ENCODE measurements at regions of chr11 and their contacts with region 1.

Region 1: DNA sequence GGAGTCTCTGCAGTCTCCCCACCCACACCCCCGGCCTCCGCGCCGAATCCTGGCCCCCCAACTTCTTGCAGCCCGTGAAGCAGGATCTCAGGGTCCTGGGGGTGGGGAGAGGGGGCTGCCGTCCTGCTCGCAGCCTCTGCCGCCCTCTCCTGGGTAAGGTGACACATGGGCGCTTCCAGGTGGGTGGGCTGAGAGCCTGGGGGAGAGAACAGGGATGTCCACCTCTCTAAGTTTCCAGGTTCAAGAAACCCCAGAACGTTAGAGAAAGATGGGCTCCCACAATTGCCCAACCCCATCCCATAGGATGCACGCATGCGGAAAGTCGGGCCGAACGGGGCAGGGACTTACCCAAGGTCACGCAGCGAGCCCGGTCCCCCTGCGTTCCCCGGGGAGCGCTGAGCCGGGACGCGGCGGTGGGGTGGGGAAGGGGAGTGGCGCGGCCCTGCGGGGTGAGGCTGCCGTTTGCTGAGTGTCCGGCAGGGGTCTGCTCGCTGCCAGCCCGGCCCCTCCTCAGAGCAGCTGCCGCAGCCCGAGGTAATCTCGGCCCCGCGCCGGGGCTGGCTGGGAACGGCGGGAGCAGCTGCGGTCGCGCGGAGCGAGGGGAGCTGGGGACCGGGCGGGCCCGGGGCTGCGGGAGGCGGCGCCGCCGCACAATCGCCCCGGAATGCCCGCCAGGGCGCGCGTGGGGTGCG is 705 bp upstream of the CAPN1 start:
- DNase-seq: peak; percentile 62
- ATAC-seq: peak; percentile 72 to 73

Region 2: DNA sequence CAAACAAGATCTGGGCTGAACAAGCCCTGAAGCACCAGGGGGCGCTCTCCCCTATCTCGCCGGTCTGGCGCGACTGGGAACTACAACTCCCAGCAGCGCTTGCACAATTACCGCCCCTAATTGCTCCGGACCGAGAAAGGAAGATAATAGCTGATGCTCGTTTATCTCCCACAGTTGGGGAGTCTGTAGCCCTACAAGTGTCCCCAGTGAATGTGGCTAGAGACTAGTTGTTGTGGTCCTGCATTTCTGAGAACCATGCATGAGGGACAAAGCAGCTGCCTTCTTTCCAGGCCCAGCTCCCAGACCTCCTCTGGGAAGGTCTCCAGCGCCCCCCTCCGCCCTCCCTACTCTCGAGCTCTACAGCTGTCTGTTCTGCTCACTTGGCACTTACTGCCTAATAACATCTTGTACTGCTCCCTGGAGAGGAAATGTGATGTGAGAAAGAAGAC is 492.5 kb before region 1 on chr11:
- intact Hi-C with region 1: no loop called
- DNase-seq: peak; percentile 92
- ATAC-seq: peak; percentile 91 to 95

Region 3: GRCh38 chr11:65117216-65118096 is 63.6 kb before region 1 on chr11 and contains the start of gene ZNHIT2:
- intact Hi-C with region 1: loop called in 1 of 2 experiments (anchors 5 kb)
- DNase-seq: peak; percentile 100
- ATAC-seq: peak; percentile 86 to 87
- total RNA-seq, gene ZNHIT2: 6.6 to 8.2 TPM

Region 4: DNA sequence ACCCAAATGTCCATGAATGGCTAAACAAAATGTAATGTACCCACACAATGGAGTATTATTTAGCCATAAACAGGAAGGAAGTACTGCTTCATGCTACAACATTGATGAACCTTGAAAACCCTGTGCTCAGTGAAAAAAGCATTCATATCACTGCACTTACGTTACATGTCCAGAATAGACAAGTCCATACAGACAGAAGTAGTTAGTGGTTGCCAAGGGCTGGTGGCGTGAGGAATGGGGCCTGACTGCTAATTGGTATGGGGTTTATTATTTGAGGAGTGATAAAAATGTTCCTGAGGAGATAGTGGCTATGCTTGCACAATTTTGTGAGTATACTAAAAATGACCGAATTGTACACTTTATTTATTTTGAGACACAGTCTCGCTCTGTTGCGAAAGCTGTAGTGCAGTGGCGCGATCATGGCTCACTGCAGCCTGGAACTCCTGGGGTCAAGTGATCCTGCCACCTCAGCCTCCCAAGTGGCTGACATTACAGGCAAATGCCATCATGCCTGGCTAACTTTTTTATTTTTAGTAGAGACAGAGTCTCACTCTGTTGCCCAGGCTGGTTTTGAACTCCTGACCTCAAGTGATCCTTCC is 39.0 kb before region 1 on chr11:
- intact Hi-C with region 1: loop called in 1 of 2 experiments (anchors 5 kb)
- DNase-seq: no peak
- ATAC-seq: no peak

Region 5: DNA sequence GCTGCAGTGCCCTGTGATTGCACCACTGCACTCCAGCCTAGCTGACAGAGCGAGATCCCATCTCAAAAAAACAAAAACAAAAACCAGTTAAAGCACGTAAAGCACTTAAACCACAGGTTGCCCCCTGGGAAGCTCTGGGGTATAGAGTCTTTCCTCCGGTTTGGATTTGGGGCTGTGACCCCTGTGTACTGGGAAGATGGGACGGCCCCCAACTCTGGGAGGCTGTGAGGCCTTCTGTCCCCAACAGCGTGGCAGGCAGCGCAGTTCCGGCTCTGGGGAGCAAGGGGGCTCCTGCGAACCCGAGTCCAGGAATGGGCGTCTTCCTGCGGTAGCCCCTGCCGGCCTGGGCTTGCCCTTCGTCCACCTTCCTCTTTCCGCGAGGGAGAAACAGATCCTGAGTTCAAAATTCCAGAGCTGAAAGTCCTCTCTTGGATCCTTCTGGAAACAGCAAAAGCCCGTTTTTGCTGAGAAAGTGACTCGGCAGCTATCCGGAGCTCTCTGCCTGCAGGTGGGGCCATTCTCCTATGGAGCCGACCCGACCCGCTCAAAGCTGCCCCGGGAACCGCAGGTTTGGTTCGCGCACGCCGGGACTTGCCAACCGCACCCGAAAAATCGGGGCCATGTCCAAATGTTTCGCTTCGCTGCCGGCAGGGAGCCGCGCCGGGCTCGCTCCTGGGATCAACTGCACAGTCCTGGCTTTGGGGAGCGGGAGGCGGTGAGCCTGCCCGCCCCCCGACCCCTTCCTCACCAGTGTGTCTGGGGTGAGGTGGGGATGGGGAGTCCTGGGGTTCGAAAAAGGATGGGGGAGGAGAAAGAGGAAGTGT is 44.5 kb after region 1 on chr11:
- intact Hi-C with region 1: no loop called
- DNase-seq: peak; percentile 79
- ATAC-seq: peak; percentile 83 to 89